WTC11 (cell line): ENCODE measurements at regions of chr1 and their contacts with region 1.

Region 1: GRCh38 chr1:108125312-108126138 is 74.6 kb downstream of the SLC25A24 start:
- DNase-seq: peak; percentile 70
- ATAC-seq: peak; percentile 85
- H3K4me3 Mint-ChIP-seq: no peak overlapping the region
- H3K27ac Mint-ChIP-seq: no peak overlapping the region; the same call in 1 of the 2 replicates
- H3K4me1 Mint-ChIP-seq: peaks cover 22% of the 10 kb centered on the region
- H3K27me3 Mint-ChIP-seq: no peaks in the 10 kb centered on the region
- CTCF ChIP-seq: peak; percentile 83

Region 2: GRCh38 chr1:107782217-107782845 is 343.2 kb before region 1 on chr1:
- CTCF ChIA-PET with region 1: interaction called, 185 read pairs
- POLR2A ChIA-PET with region 1: interaction called, 4 read pairs
- DNase-seq: no peak
- ATAC-seq: no peak; the same call in 1 of the 2 replicates
- H3K4me3 Mint-ChIP-seq: no peak overlapping the region
- H3K27ac Mint-ChIP-seq: no peak overlapping the region
- H3K4me1 Mint-ChIP-seq: peaks cover 5% of the 10 kb centered on the region; the same call in 1 of the 2 replicates
- H3K27me3 Mint-ChIP-seq: no peaks in the 10 kb centered on the region
- CTCF ChIP-seq: peak; percentile 68

Region 3: DNA sequence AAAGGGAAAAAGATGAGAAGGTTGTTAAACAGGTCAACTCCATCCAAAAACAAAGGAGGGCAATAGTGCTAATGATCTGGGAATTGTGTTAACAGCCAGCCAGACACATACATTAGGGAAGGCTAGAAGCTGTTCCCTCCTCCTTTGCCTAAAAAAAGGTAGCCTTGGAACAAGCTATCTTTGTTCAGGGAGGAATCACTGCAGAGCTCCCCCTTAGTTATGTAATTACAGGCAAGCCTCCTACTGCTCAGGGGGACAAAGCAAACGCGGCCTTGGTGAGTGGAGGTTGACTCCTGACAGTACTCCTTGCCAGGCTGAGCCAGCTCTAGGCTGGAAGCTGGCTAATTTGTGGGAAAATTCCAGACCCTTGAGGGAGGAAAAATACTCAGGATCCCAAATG is 258.1 kb before region 1 on chr1:
- CTCF ChIA-PET with region 1: interaction called, 10 read pairs
- POLR2A ChIA-PET with region 1: no interaction called
- DNase-seq: peak; percentile 70
- ATAC-seq: peak; percentile 99
- H3K4me3 Mint-ChIP-seq: peak overlapping the region; percentile 31
- H3K27ac Mint-ChIP-seq: peak overlapping the region; percentile 94
- H3K4me1 Mint-ChIP-seq: peaks cover 65% of the 10 kb centered on the region
- H3K27me3 Mint-ChIP-seq: no peaks in the 10 kb centered on the region; the same call in 1 of the 2 replicates
- CTCF ChIP-seq: no peak

Region 4: DNA sequence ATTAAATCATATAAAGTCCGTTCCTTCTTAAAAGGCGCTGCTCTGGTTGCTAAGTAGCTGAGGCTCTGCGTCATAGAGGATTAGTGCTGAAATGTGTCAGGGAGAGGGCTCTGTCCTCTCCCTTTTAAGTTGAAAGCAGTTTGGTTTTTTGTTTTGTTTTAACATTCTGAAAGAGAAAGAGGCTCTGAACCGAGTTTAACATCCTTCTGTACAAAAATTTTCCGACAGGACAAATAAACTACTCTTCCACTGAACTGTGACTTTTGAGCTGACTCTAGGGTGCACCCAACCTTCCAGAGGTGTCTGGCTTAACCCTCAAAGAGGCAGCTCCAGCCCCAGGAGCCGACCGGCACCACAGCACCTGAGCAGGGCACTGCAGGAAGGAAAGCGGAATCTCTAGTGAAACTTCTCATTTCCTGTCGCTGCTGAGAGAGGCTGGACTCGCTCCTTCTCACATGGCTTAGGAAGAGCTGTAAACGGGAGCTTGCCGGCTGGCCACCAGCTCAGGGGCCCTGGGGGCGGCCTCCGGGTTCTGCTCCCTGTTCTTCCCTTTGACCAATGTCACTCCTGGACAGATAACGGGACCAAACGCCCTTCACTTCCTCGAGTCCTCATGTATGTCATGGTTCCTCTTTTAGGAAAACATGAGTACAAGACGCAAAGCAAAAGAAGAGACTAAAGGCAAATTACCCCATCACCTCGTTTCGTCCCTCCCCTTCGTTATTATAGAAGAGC is 161.8 kb before region 1 on chr1:
- CTCF ChIA-PET with region 1: interaction called, 21 read pairs
- POLR2A ChIA-PET with region 1: no interaction called
- DNase-seq: peak; percentile 37
- ATAC-seq: peak; percentile 15
- H3K4me3 Mint-ChIP-seq: peak overlapping the region; percentile 91
- H3K27ac Mint-ChIP-seq: peak overlapping the region; percentile 34
- H3K4me1 Mint-ChIP-seq: peaks cover 19% of the 10 kb centered on the region
- H3K27me3 Mint-ChIP-seq: peaks cover 17% of the 10 kb centered on the region
- CTCF ChIP-seq: no peak